SK-N-SH (cell line): ENCODE measurements at regions of chr12 and their contacts with region 1.

Region 1: GRCh38 chr12:69900720-69901131 is 75.7 kb downstream of the MYRFL start:
- DNase-seq: peak; percentile 29
- H3K4me3 ChIP-seq: no peak overlapping the region; a peak in 1 of 4 replicates
- H3K27ac ChIP-seq: no peak overlapping the region
- H3K4me1 ChIP-seq: peaks cover 11 to 15% of the 10 kb centered on the region in 2 experiments; a peak in 2 of 4 replicates
- H3K27me3 ChIP-seq: no peaks in the 10 kb centered on the region
- CTCF ChIP-seq: peak; percentile 94
- EP300 ChIP-seq: no peak
- RAD21 ChIP-seq: peak; percentile 91

Region 2: DNA sequence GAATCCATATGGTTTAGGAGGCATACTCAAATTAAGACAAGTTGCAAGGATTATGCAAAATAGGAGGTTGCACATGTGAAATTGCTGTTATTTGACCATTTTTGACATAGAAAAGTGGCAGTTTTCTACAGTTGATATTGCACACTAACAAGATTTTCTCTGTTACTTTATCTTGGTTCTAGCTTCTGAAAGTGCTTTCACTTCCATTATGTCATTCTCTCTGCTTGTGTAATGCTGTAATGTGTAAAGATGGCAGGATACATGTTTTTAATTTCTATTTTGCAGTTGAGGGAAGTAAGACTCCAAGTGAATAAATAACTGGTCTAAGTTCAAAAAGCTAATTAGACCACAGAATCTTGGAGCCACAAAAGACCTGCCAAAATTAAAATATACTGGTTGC is 15.1 kb before region 1 on chr12:
- CTCF ChIA-PET with region 1: interaction called, 36 read pairs
- POLR2A ChIA-PET with region 1: no interaction called
- DNase-seq: no peak
- H3K4me3 ChIP-seq: no peak overlapping the region
- H3K27ac ChIP-seq: no peak overlapping the region
- H3K4me1 ChIP-seq: peaks cover 0 to 2% of the 10 kb centered on the region in 2 experiments; a peak in 1 of 4 replicates
- H3K27me3 ChIP-seq: no peaks in the 10 kb centered on the region
- CTCF ChIP-seq: no peak
- EP300 ChIP-seq: no peak
- RAD21 ChIP-seq: no peak

Region 3: GRCh38 chr12:70366581-70367257 is 466.0 kb after region 1 on chr12:
- CTCF ChIA-PET with region 1: interaction called, 10 read pairs
- POLR2A ChIA-PET with region 1: no interaction called
- DNase-seq: peak; percentile 60
- H3K4me3 ChIP-seq: peak overlapping the region; percentile 70 to 79
- H3K27ac ChIP-seq: no peak overlapping the region; a peak in 1 of 4 replicates
- H3K4me1 ChIP-seq: peaks cover 0 to 15% of the 10 kb centered on the region in 2 experiments; a peak in 2 of 4 replicates
- H3K27me3 ChIP-seq: no peaks in the 10 kb centered on the region
- CTCF ChIP-seq: no peak
- EP300 ChIP-seq: no peak
- RAD21 ChIP-seq: no peak

Region 4: GRCh38 chr12:70576346-70577282 is 675.9 kb after region 1 on chr12:
- CTCF ChIA-PET with region 1: interaction called, 136 read pairs
- POLR2A ChIA-PET with region 1: no interaction called
- DNase-seq: peak; percentile 53
- H3K4me3 ChIP-seq: peak overlapping the region in 1 of 2 experiments; percentile 21; a peak in 1 of 4 replicates
- H3K27ac ChIP-seq: peak overlapping the region in 1 of 2 experiments; percentile 42; a peak in 1 of 4 replicates
- H3K4me1 ChIP-seq: no peaks in the 10 kb centered on the region
- H3K27me3 ChIP-seq: no peaks in the 10 kb centered on the region
- CTCF ChIP-seq: peak; percentile 89
- EP300 ChIP-seq: no peak
- RAD21 ChIP-seq: peak; percentile 95

Region 5: DNA sequence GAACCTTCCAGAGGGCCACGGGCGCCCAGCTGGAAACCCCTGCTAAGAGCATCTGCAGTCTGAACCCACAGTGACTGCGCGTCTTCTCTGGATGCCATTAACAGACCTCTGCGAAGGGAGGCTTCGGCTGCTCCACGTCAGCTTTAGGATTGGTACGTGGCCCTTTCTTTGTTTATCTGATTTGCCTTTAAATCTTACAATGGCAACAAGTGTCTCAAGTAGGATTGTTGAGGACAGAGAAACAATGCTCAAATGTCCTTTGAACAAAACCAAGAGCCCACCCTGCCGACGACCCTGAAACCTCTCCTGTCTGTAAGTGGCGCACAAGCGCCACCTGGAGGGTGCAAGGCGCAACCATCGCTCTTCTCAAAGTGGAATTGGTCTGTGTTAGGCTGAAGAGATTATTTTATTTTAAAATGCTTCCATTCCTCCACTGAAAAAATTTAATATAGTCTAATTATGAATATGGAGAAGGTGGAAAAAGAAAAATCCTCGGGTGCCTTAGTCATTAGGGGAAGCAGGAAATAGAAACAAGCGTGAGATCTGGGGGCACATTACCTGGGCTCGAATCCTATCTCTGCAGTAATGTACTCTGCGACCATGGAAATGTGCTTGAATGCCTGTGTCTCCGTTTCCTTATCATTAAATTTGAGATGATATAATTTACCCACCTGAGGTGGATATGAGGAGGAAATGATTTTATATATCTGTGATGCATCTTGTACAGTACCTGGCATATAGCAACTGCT is 819.1 kb after region 1 on chr12:
- CTCF ChIA-PET with region 1: interaction called, 12 read pairs
- POLR2A ChIA-PET with region 1: no interaction called
- DNase-seq: peak; percentile 48
- H3K4me3 ChIP-seq: peak overlapping the region; percentile 9 to 53; a peak in 2 of 4 replicates
- H3K27ac ChIP-seq: no peak overlapping the region
- H3K4me1 ChIP-seq: peaks cover 0 to 2% of the 10 kb centered on the region in 2 experiments; a peak in 2 of 4 replicates
- H3K27me3 ChIP-seq: no peaks in the 10 kb centered on the region
- CTCF ChIP-seq: peak; percentile 99
- EP300 ChIP-seq: no peak
- RAD21 ChIP-seq: peak; percentile 81